ENCODE measurements at regions of chr6 and their contacts with region 1.

Region 1: DNA sequence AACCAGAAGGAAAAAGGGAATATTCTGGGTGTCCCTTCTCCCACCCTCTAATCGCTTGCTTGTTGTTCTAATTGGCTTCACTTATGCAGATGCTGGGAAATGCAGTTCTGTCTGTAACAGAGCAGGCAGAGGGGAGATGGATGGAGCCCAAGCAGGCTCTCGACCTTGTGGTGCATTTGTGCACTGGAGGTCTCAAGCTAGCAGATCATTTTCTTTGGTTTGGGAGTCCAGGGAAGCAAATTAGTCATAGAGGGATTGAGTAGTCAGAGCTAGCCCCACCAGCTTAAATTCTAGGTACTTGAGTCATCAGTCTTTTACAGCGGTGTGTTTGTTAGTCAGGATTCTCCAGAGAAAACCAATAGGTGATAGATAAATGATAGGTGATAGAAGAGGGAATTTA is 234.7 kb upstream of the ECI2 start:
- DNase-seq: no peak

Region 2: DNA sequence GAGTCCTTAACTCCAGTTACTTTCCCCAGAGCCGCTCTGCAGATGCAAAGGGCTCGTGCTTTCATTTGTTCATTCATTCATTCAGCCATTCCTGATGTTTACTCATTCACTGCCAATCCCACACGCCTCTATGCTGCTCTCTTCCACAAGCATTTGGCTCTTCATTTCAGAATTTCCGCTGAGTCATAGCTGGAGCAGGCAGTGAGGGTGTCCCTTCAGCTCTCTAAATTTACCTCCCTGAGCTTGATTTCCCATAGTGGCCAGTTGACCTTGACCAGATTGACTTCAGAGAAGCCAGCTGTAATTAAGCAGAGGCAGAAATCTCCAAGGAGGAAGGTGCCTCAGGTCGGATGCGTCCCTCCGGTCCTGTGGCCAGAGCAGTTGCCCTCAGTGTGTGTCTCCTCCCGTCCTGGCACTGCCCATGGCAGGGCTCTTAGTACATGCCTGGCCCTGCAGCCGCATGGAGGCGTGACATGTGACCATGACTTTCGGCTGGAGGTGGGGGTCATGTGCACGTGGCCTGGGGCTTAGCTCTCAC is 32.4 kb after region 1 on chr6:
- intact Hi-C with region 1: loop called (anchors 2 kb)
- DNase-seq: no peak

Region 3: DNA sequence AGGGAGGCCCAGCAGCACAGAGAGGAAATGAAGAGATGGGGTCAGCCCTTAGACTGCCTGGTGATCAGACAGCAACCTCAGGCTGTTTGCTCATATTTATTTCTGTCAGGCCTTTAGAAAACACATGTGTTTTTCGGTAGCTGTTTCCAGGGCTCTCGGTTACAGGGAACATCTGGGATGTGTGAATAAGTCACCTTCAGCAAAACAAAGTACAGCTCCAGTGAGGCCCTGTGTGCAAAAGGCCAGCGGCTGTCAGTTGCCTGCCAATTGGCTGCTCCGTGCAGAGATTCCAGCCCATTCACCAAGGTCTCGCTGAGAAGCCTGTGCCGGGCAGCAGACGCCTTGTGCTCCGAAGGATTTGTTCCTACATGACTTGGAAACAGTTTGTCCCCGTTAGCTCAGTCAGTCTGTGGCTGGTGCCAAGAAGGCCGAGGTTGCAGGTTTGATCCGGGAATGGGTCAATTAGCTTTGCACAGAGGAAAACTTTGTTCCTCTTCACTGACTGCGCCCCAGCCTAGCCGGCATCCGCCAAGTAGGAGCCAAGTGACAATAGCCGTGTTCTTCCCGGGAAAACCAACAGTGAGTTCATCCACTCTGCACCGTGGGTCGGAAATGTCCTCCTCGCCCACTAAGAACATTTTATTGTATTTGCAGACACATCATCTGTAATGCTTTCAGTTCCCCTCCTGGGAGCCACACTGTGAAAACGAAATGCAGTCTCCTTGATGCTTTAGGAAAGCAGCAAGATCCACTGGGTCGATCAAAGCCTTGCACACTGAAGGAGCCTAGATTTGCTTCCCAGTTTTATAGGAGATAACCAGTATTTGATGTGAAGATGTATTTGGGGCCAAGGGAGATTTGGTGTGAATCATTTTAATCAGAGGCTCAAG is 90.8 kb after region 1 on chr6:
- intact Hi-C with region 1: loop called (anchors 5 kb)
- DNase-seq: peak; percentile 79